ENCODE measurements at regions of chr6 and their contacts with region 1.

Region 1: DNA sequence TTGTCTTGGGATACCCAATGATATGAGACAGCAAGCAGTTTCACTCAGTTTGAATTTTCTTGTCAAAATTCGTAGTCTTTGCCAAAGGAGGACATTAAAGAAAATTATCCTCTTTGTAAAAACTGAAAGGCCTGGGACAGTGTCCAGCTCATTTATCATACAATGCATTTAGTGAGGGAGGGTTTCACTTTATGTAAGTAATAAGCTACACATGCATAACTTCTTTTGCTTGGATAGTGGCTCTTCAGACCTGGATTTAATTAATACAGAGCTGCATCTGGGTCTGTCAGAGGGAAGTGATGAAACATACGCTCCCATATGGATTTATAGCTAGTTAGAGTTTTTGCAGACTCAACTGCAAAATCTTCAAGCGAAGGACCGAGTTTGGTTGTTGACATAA is 175.6 kb downstream of the PHACTR1 start:
- DNase-seq: no peak
- H3K4me3 ChIP-seq: no peak overlapping the region
- CTCF ChIP-seq: no peak

Region 2: DNA sequence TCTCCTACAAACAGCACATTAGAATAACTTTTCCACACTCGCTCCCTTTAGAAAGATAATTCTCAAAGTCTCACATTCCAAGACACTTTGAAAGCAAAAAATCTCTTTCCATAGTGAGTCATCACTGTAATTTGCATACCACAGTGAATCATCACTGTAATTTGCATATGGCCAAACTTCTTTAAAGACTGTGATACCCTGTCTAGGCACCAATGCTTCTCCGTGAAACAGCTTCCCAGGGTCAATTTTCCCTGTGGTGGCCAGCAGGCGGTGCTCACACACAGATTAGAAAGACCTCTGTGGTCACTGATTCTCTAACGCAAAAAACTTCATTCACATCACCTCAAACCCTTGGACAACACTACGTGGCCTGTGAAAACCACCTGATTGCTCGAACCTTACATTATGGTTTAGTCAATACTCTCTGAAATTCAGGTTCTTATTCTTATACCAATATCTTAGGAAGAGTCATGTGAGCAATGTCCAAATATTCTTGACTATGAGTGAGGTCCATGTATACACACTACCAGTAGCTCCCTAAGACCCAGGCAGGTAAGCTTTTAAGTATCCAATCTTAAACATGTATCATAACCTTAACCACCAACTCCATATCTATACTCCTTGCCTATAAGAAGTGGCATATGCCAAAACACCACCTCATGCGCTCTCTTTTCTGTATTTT is 254.1 kb before region 1 on chr6:
- CTCF ChIA-PET with region 1: interaction called, 62 read pairs
- POLR2A ChIA-PET with region 1: no interaction called
- DNase-seq: no peak
- H3K4me3 ChIP-seq: no peak overlapping the region
- CTCF ChIP-seq: peak; percentile 72

Region 3: DNA sequence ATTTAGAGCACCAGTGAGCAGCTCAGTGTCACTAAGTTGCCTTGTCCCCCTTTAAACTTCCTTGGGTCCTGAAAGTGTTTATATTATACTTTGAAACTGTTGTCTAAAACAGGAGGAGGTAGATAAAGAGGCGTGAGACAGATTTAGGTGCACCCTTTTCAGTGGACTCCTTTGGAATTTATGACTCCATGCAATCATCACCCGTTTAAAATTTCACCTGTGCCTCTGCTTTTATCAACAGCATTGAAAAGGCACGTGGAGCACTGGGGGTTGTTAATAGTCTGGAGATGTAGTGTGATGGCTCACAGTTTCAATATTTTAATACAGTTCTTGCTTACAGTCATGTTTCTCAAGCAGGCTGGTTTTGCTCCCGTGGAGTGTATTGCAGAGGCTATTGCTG is 13.4 kb before region 1 on chr6:
- CTCF ChIA-PET with region 1: interaction called, 28 read pairs
- POLR2A ChIA-PET with region 1: no interaction called
- DNase-seq: no peak
- H3K4me3 ChIP-seq: no peak overlapping the region
- CTCF ChIP-seq: no peak